Activated T-helper 1 cell treated with anti-CD3 and anti-CD28 coated beads, Interleukin-12 subunit alpha, Interleukin-12 subunit beta, Interleukin-2, Interleukin-4 antibody, amounts not matched to agents 30 ng/mL and 10 ng/mL and 1 ng/mL, durations not matched to agents 14 hours and 24 hours and 36 hours (primary cell): ENCODE measurements at regions of chr18 and their contacts with region 1.

Region 1: DNA sequence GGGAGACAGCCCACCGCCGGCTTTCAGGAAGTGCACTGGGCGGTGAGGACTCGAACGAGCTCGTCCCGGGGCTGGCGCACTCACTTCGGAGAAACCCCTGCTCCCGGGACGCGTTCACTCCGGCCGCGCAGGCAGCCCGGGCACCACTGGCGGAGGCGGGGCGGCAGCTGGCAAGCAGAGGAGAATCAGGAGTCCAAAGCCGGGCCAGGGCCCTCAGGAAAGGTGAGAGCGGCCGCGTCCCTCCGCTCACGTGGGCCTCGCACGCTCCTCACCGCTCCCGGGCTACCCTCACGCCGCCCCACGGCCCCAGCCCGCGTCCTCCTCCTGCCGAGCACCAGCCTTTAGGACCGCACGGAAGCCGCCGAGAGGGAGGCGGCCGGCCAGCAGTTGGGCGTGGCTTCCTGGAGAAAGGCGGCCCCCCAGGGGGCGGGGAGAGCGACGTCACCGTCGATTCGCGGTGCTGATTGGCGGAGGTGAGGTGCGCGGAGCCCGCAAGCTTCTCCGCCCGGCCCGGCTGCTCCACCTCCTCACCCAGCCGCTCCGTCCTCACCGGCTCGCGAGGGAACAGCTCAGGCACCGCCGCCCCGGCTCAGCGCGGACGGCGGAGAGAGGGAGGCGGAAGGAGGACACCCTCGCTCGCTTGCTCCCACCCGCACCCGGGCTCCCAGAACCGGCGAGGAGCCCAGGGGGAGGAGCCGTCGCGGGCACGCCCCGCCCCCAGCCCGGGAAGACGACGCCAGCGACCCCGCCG is at the start of gene ZCCHC2:
- DNase-seq: peak; percentile 99
- H3K4me3 Mint-ChIP-seq: peak within 1 kb of the TSS; percentile 98
- H3K27ac Mint-ChIP-seq: peak within 1 kb of the TSS; percentile 94
- H3K4me1 Mint-ChIP-seq: peaks cover 35% of the 10 kb centered on the region
- H3K27me3 Mint-ChIP-seq: peaks cover 4% of the 10 kb centered on the region
- total RNA-seq, gene ZCCHC2: 55.7 and 58.8 TPM in 2 replicates

Region 2: DNA sequence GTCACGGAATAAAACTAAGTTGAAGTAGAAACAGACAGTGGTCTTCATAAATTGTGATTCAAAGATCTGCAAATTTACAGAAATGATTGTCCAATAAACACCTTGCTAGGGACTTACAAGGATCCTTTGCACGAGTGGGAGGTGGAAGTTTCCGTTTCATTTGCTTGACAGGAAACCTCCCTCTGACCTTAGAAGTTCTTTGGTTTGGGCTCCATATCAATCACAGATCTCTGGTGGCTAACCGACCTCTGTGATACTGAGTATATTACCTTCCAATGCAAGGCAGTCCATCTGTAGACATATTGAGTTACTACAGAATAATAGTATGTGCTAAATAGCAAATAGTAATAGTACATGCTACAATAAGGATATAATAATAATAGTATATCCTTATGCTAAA is 596.1 kb before region 1 on chr18:
- intact Hi-C with region 1: loop called (anchors 10 kb)
- DNase-seq: peak; percentile 26
- H3K4me3 Mint-ChIP-seq: peak overlapping the region; percentile 63
- H3K27ac Mint-ChIP-seq: peak overlapping the region; percentile 74
- H3K4me1 Mint-ChIP-seq: peaks cover 40% of the 10 kb centered on the region
- H3K27me3 Mint-ChIP-seq: peaks cover 12% of the 10 kb centered on the region

Region 3: DNA sequence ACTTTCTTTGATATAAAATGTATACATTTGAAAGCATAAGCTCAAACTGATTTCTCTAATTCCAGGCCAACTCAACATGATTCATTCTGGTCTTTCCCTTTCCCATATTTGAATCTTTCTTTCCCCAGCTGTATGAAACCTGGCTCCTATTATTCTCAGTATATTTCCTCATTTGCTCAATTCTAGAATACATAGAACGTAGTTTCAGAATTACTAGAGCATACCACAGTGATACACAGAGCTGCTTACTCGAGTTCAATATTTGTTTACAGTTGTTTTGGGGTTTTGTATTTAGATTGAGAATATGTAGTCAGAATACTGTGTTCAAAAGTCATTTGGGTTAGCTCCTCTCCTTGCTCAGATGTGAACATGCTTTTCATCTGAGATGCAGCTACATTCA is 154.6 kb before region 1 on chr18:
- intact Hi-C with region 1: loop called (anchors 1 kb)
- DNase-seq: no peak
- H3K4me3 Mint-ChIP-seq: peak overlapping the region; percentile 23
- H3K27ac Mint-ChIP-seq: peak overlapping the region; percentile 85
- H3K4me1 Mint-ChIP-seq: peaks cover 73% of the 10 kb centered on the region
- H3K27me3 Mint-ChIP-seq: no peaks in the 10 kb centered on the region

Region 4: GRCh38 chr18:62505669-62506494 is 16.8 kb before region 1 on chr18:
- intact Hi-C with region 1: loop called (anchors 1 kb)
- DNase-seq: peak; percentile 25
- H3K4me3 Mint-ChIP-seq: peak overlapping the region; percentile 81
- H3K27ac Mint-ChIP-seq: peak overlapping the region; percentile 96
- H3K4me1 Mint-ChIP-seq: peaks cover 23% of the 10 kb centered on the region
- H3K27me3 Mint-ChIP-seq: peaks cover 2% of the 10 kb centered on the region

Region 5: DNA sequence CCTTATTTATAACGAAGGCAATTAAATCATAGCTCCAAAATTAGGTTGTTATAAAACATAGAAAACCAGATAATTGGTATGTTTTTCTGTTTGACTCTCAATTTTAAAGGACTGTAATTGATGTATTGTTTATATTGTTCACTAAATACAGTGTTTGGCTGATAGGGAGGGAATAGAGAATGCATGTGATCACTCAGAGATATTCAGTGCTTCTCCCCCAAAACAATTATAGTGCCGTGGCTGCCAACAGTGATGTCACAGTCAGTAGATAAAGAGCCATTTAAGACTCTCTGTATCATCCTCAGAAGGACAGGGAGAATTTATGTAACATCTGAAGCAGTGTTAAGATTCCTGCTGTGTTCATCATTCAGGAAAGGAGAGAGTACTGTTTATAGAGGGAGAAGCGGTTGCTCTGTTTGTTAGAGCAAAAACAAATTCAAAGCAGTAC is 262.3 kb after region 1 on chr18:
- intact Hi-C with region 1: loop called (anchors 5 kb)
- DNase-seq: no peak
- H3K4me3 Mint-ChIP-seq: no peak overlapping the region
- H3K27ac Mint-ChIP-seq: no peak overlapping the region
- H3K4me1 Mint-ChIP-seq: peaks cover 36% of the 10 kb centered on the region
- H3K27me3 Mint-ChIP-seq: no peaks in the 10 kb centered on the region

Region 6: DNA sequence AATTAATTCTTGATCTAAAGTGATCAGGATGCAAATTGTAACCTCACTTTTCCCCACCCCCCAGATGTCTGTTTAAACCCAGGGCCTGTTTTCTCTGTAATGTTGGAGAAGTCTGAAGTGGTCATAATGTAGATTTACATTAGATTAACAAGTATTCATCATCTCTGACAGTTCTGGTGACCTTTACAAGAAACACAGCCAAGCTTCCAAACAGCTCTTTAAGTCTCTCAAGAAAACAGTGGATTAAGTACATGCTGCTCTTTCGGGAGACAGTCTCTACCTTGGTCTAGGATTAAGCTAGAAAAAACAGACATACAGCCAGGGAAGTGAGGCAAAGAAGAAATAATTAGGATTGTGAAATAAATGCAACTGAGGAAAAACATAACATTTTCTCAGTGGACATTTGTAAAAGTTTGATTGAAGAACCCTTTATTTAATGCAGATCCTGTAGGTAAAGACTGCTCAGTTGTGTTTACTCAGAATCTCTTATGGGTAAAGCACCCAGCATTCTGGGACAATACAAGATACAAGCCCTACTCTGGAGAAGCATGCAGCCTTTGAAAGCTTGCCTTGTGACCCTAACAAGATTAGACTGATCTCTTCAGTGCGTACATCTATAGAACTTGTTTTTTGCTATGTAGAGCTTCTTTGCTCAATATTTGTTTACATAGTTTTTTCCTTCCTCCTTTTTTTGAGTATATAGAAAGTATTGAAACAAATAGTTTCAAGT is 396.6 kb after region 1 on chr18:
- intact Hi-C with region 1: no loop called
- DNase-seq: no peak
- H3K4me3 Mint-ChIP-seq: no peak overlapping the region
- H3K27ac Mint-ChIP-seq: no peak overlapping the region
- H3K4me1 Mint-ChIP-seq: no peaks in the 10 kb centered on the region
- H3K27me3 Mint-ChIP-seq: no peaks in the 10 kb centered on the region

Region 7: GRCh38 chr18:63155169-63155852 is 632.6 kb after region 1 on chr18:
- intact Hi-C with region 1: loop called (anchors 5 kb)
- DNase-seq: peak; percentile 72
- H3K4me3 Mint-ChIP-seq: peak overlapping the region; percentile 79
- H3K27ac Mint-ChIP-seq: peak overlapping the region; percentile 88
- H3K4me1 Mint-ChIP-seq: peaks cover 99% of the 10 kb centered on the region
- H3K27me3 Mint-ChIP-seq: no peaks in the 10 kb centered on the region

Region 8: DNA sequence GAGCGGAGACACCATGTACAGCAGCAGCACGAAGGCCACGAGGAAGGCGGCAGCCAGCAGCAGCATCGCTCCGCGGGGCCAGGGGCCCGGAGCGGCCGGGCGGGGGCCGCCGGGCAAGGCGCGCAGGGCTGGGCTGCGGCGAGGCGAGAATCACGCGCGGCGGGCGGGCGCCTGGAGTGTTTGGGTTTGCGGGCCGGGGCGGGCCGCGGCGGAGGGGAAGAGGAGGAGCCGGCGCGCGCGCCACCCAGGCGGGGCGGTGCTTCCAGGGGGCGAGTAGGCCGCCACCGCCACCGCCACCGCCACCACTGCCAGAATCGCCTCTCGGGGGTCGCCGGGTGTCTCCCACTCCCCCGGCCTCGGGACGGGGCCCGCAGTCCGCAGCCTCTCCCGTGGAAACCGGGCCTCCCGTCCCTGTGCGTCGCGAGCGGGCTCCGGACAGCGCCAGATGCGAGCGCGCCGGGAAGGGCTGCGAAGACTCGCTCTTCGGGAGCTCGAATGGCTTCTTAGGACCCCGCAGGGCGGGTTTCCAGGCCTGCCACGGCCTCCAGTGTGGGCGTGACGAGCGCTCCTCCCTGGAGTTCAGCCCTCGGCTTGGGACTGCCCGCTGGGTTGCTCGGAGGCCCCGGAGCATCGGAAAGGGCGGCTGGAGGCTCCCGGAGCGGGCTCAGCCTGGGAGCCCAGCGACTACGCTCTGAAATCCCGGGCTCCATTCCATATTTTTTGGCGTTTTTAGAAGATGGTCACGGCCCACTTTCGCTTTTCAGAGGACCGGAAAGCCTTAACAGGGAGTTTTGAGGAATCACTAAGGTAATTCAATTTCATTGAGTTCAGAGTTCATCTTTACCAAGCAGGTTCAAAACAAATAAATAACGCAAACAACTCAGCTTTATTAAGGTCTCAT is 844.6 kb after region 1 on chr18 and contains the start of gene KDSR:
- intact Hi-C with region 1: loop called (anchors 2 kb)
- DNase-seq: peak; percentile 82
- H3K4me3 Mint-ChIP-seq: peak within 1 kb of the TSS; percentile 93
- H3K27ac Mint-ChIP-seq: peak within 1 kb of the TSS; percentile 83
- H3K4me1 Mint-ChIP-seq: peaks cover 44% of the 10 kb centered on the region
- H3K27me3 Mint-ChIP-seq: no peaks in the 10 kb centered on the region
- total RNA-seq, gene KDSR: 72.2 and 83.5 TPM in 2 replicates